ENCODE measurements at regions of chr6 and their contacts with region 1.

Region 1: GRCh38 chr6:137944793-137945498 is 77.9 kb downstream of the TNFAIP3 start:
- DNase-seq: peak in 1 of 2 donors; percentile 4
- H3K4me3 ChIP-seq: no peak overlapping the region
- H3K27ac ChIP-seq: no peak overlapping the region
- H3K4me1 ChIP-seq: no peaks in the 10 kb centered on the region
- H3K27me3 ChIP-seq: no peaks in the 10 kb centered on the region
- CTCF ChIP-seq: peak in 5 of 6 experiments; percentile 58 to 82 (median 73)
- POLR2A ChIP-seq: no peak

Region 2: GRCh38 chr6:137700751-137701477 is 244.0 kb before region 1 on chr6:
- intact Hi-C with region 1: loop called (anchors 5 kb)
- DNase-seq: no peak
- H3K4me3 ChIP-seq: no peak overlapping the region
- H3K27ac ChIP-seq: no peak overlapping the region
- H3K4me1 ChIP-seq: peaks cover 0 to 6% of the 10 kb centered on the region in 2 donors
- H3K27me3 ChIP-seq: no peaks in the 10 kb centered on the region
- CTCF ChIP-seq: no peak
- POLR2A ChIP-seq: no peak

Region 3: GRCh38 chr6:137799950-137800568 is 144.9 kb before region 1 on chr6:
- intact Hi-C with region 1: loop called (anchors 10 kb)
- DNase-seq: peak; percentile 30 to 55
- H3K4me3 ChIP-seq: no peak overlapping the region
- H3K27ac ChIP-seq: no peak overlapping the region
- H3K4me1 ChIP-seq: no peaks in the 10 kb centered on the region
- H3K27me3 ChIP-seq: no peaks in the 10 kb centered on the region
- CTCF ChIP-seq: peak in 5 of 6 experiments; percentile 24 to 70 (median 50)
- POLR2A ChIP-seq: no peak

Region 4: GRCh38 chr6:137866914-137867684 is 77.8 kb before region 1 on chr6 and contains the start of gene TNFAIP3:
- intact Hi-C with region 1: loop called (anchors 10 kb)
- DNase-seq: peak; percentile 94 to 95
- H3K4me3 ChIP-seq: peak within 1 kb of the TSS; percentile 33 to 78 (median 72)
- H3K27ac ChIP-seq: peak within 1 kb of the TSS; percentile 74 to 85 (median 82)
- H3K4me1 ChIP-seq: peaks cover 12 to 27% of the 10 kb centered on the region in 2 donors
- H3K27me3 ChIP-seq: no peaks in the 10 kb centered on the region
- CTCF ChIP-seq: peak in 5 of 6 experiments; percentile 44 to 97 (median 83)
- POLR2A ChIP-seq: peak; percentile 42 to 91
- total RNA-seq, gene TNFAIP3: 5.9 to 7.8 (median 7.3) TPM